ENCODE measurements at regions of chr13 and their contacts with region 1.

Region 1: DNA sequence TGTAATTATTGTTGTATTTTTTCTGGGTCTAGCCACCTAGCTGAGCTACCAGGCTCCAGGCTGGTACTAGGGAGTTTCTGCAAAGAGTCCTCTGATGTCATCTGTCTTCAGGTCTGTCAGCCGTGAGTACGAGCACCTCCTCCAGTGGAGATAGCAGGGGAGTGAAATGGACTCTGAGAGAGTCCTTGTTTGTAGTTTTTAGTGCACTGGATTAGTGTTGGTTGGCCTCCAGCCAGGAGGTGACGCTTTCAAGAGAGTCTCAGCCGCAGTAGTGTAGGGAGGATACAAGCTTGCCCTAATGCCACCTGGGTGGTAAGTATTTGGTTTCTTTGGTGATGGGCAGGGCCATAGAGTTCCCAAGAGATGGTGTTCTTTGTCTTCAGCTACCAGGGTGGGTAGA is 384.8 kb downstream of the SLC7A1 start:
- DNase-seq: no peak
- ATAC-seq: no peak
- H3K4me3 ChIP-seq: no peak overlapping the region
- H3K27ac ChIP-seq: no peak overlapping the region
- H3K4me1 ChIP-seq: no peaks in the 10 kb centered on the region
- H3K27me3 ChIP-seq: no peaks in the 10 kb centered on the region

Region 2: DNA sequence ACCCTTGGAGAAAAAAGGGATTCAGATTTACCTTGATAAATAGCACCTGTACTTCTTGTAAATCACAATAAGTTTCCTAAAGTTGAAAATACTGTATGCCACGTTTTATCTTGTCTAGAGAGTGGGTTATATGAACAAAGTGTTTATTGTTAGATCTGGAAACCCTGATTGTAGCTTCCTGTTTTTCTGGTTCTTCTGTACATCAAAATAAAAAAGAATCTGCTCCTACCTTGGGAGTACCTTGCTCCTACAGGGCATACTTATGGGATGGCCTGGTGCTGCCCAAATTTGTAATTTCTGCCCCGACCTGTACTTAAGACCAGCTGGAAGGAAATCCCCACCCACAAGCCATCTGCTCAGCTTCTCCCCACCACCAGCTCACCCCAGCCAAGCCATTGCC is 143.7 kb after region 1 on chr13:
- intact Hi-C with region 1: loop called in 1 of 2 experiments (anchors 5 kb)
- DNase-seq: no peak
- ATAC-seq: no peak
- H3K4me3 ChIP-seq: no peak overlapping the region
- H3K27ac ChIP-seq: no peak overlapping the region
- H3K4me1 ChIP-seq: no peaks in the 10 kb centered on the region
- H3K27me3 ChIP-seq: no peaks in the 10 kb centered on the region